Tibial artery (tissue), 4 donors: ENCODE measurements at regions of chr2 and their contacts with region 1.

Region 1: DNA sequence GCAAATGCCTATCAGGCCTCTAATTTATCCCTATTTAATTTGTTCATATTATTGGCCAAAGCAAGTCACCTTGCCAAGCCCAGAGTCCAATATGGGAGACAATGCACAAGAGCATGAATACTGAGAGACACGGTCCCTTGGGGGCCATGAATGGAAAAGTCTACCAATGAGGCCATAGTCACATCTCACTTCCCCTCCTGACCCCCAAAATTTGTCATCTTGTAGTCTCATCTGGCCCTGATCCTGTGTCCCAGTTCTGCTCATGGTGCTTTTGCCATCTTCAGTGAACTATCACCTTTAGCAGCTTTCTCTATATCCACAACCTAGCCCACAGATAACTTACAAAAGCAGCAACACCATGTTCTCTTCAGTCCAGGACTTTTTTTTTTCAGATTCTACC is 302.7 kb upstream of the MGAT5 start:
- DNase-seq: no peak
- H3K4me3 ChIP-seq: no peak overlapping the region
- H3K27ac ChIP-seq: no peak overlapping the region
- H3K4me1 ChIP-seq: no peaks in the 10 kb centered on the region
- H3K27me3 ChIP-seq: peaks cover 0 to under 1% of the 10 kb centered on the region in 2 donors
- CTCF ChIP-seq: no peak

Region 2: GRCh38 chr2:133462811-133463210 is 488.4 kb before region 1 on chr2:
- intact Hi-C with region 1: loop called (anchors 2 kb)
- DNase-seq: no peak
- H3K4me3 ChIP-seq: no peak overlapping the region
- H3K27ac ChIP-seq: no peak overlapping the region
- H3K4me1 ChIP-seq: no peaks in the 10 kb centered on the region
- H3K27me3 ChIP-seq: no peaks in the 10 kb centered on the region
- CTCF ChIP-seq: no peak

Region 3: DNA sequence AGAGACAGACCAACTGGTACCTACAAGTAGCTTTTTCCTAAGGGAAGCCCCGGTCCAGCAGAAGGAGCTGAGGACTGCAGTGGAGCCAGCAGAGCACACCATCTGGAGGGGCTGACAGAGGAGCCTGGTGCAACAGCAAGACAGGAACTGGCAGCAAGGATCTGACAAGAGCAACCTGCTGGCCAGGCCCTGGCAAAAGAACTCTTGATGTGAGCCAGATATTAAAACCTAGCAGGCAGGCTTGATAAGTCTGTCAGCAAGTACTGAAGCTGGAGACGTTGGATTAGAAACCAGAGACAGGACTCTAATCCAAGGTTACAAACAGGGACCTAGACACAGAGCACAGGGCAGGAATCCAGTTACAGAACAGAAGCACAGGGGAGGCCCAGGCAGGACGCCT is 42.0 kb after region 1 on chr2:
- intact Hi-C with region 1: no loop called
- DNase-seq: no peak
- H3K4me3 ChIP-seq: no peak overlapping the region
- H3K27ac ChIP-seq: no peak overlapping the region
- H3K4me1 ChIP-seq: no peaks in the 10 kb centered on the region
- H3K27me3 ChIP-seq: no peaks in the 10 kb centered on the region
- CTCF ChIP-seq: no peak